HAP-1 (cell line): ENCODE measurements at regions of chr5 and their contacts with region 1.

Region 1: DNA sequence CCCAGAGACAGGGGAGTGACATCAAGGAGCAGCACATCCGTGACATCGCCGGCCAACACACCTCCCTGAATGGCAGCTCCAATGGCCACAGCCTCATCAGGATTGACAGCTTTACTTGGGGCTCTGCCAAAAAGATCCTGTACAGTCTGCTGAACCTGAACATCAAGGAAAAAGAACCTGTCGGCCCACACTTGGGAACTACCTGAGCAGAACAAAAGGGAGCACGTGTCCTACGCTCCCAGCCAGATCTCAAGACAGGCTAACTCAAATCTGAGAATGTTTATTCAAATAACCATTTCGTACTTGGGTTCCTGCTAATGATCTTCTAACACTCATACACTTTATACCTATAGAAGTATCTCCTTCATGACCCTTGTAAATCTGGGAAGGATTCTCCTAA is 15.3 kb downstream of the HSPA9 start:
- DNase-seq: no peak
- H3K4me3 ChIP-seq: no peak overlapping the region
- H3K4me1 ChIP-seq: no peaks in the 10 kb centered on the region
- H3K27me3 ChIP-seq: no peaks in the 10 kb centered on the region

Region 2: GRCh38 chr5:138470322-138471193 is 89.4 kb before region 1 on chr5:
- in situ Hi-C with region 1: no loop called
- DNase-seq: no peak
- H3K4me3 ChIP-seq: no peak overlapping the region
- H3K4me1 ChIP-seq: no peaks in the 10 kb centered on the region; the same call in 1 of the 2 replicates
- H3K27me3 ChIP-seq: no peaks in the 10 kb centered on the region

Region 3: GRCh38 chr5:139315056-139315615 is 755.2 kb after region 1 on chr5:
- in situ Hi-C with region 1: loop called (anchors 10 kb)
- DNase-seq: no peak
- H3K4me3 ChIP-seq: no peak overlapping the region
- H3K4me1 ChIP-seq: no peaks in the 10 kb centered on the region
- H3K27me3 ChIP-seq: no peaks in the 10 kb centered on the region